ENCODE measurements at regions of chr7 and their contacts with region 1.

Region 1: DNA sequence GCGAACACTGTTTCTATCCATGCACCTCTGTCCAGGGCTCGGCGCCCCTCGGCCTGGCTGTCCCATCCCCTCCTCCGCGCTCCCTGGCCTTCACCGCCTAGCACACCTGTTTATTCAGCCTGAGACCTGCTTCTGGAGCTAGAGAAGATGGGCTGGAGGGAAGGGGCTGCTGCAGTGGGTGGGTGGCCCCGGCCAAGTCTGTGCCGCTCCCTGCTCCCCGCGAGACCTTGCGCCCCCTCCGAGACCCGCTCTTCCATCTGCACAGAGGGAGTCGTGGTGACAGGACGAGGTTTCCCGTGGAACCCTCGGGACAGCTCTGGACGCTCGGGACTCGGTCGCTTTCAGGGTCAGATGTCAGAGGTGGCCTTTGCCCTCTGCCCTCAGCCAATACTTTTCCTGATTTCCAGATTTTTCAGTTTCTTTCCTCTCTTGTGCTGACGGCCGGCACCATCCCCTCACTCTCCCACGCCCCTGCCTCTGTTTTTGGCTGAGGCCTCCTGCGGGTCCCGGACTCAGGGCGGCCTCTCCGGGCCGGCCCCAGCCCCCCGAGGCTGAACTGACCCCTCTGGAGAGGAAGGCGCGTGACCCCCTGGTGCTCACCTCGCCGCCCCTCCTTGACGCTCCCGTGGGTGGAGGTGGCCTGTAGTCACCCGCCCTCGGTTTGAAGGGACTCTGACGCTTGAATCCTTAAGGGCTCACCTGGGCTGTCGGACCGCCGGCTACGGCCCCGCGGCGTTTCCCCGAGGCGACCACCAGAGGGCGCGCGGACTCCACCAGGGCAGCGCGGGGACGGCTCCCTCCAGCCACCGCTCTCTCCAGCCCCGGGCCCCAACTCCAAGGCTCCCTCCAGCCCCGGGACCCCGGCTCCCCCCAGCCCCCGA is 15.6 kb downstream of the SHH start:
- DNase-seq: no peak
- ATAC-seq: peak; percentile 97
- H3K4me3 ChIP-seq: no peak overlapping the region
- H3K27ac ChIP-seq: no peak overlapping the region
- H3K4me1 ChIP-seq: no peaks in the 10 kb centered on the region; a peak in 1 of 4 replicates
- H3K27me3 ChIP-seq: no peaks in the 10 kb centered on the region
- CTCF ChIP-seq: peak; percentile 42 to 57 (median 56); a peak in 5 of 6 replicates
- POLR2A ChIP-seq: no peak
- RAD21 ChIP-seq: peak; percentile 93

Region 2: GRCh38 chr7:155763691-155764437 is 32.8 kb before region 1 on chr7:
- CTCF ChIA-PET with region 1: no interaction called
- POLR2A ChIA-PET with region 1: no interaction called
- RAD21 ChIA-PET with region 1: no interaction called
- intact Hi-C with region 1: no loop called
- DNase-seq: no peak
- ATAC-seq: no peak
- H3K4me3 ChIP-seq: no peak overlapping the region
- H3K27ac ChIP-seq: no peak overlapping the region
- H3K4me1 ChIP-seq: no peaks in the 10 kb centered on the region
- H3K27me3 ChIP-seq: no peaks in the 10 kb centered on the region
- CTCF ChIP-seq: no peak
- POLR2A ChIP-seq: no peak
- RAD21 ChIP-seq: no peak

Region 3: DNA sequence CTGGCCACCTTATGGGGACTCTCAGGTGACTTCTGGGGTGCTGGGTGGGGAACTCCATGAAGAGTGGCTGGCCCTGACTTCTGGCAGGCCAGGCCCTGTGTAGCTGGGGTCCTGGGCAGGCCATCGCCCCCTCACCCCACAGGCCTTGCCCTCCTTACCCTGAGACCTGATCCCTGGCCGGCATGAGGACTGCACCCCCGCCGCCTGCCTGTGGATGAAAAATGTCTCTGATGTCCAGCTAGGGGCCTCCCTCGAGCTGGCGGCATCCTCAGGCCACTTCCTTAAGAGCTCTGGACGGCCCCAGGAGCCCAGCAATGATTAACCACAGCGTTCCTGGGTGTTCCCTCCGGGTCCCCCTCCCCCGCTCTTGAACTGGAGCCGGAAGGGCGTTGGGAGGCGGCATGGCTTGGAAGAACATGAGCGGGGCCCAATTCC is 47.4 kb after region 1 on chr7:
- CTCF ChIA-PET with region 1: no interaction called
- POLR2A ChIA-PET with region 1: no interaction called
- RAD21 ChIA-PET with region 1: no interaction called
- intact Hi-C with region 1: no loop called
- DNase-seq: no peak
- ATAC-seq: no peak
- H3K4me3 ChIP-seq: no peak overlapping the region
- H3K27ac ChIP-seq: peak overlapping the region; percentile 17; the same call in 1 of the 2 replicates
- H3K4me1 ChIP-seq: peaks cover 3 to 7% of the 10 kb centered on the region in 2 experiments; a peak in 2 of 4 replicates
- H3K27me3 ChIP-seq: no peaks in the 10 kb centered on the region
- CTCF ChIP-seq: no peak
- POLR2A ChIP-seq: no peak
- RAD21 ChIP-seq: peak; percentile 50

Region 4: DNA sequence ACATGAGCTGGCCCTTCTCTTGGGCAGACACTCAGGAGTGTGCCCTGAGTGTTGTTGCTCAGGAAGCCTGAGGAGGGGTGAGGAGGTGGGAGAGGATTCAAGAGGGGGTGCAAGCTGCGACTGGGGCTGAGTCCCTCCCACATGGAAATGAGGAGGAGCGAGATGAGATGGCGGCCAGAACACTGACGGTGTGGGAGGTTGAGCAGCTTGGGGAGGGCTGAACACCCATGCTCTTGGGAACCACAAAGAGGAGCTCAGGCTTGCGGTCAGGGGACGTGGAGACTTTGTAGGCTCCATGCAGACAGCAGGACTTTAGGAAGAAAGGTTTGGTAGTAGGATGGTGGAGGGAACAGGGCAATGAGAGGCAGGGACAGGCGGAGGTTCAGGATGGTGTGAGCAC is 178.9 kb after region 1 on chr7:
- CTCF ChIA-PET with region 1: no interaction called
- POLR2A ChIA-PET with region 1: no interaction called
- RAD21 ChIA-PET with region 1: no interaction called
- intact Hi-C with region 1: no loop called
- DNase-seq: no peak
- ATAC-seq: no peak
- H3K4me3 ChIP-seq: no peak overlapping the region
- H3K27ac ChIP-seq: no peak overlapping the region
- H3K4me1 ChIP-seq: no peaks in the 10 kb centered on the region
- H3K27me3 ChIP-seq: peaks cover 22% of the 10 kb centered on the region; the same call in 1 of the 2 replicates
- CTCF ChIP-seq: no peak
- POLR2A ChIP-seq: no peak
- RAD21 ChIP-seq: no peak

Region 5: GRCh38 chr7:156473476-156474240 is 677.0 kb after region 1 on chr7:
- CTCF ChIA-PET with region 1: no interaction called
- POLR2A ChIA-PET with region 1: no interaction called
- RAD21 ChIA-PET with region 1: no interaction called
- intact Hi-C with region 1: loop called (anchors 5 kb)
- DNase-seq: peak; percentile 27
- ATAC-seq: peak; percentile 90
- H3K4me3 ChIP-seq: no peak overlapping the region
- H3K27ac ChIP-seq: no peak overlapping the region
- H3K4me1 ChIP-seq: peaks cover 0 to 19% of the 10 kb centered on the region in 2 experiments; a peak in 2 of 4 replicates
- H3K27me3 ChIP-seq: no peaks in the 10 kb centered on the region
- CTCF ChIP-seq: peak; percentile 85 to 90 (median 87)
- POLR2A ChIP-seq: no peak
- RAD21 ChIP-seq: peak; percentile 91

Region 6: DNA sequence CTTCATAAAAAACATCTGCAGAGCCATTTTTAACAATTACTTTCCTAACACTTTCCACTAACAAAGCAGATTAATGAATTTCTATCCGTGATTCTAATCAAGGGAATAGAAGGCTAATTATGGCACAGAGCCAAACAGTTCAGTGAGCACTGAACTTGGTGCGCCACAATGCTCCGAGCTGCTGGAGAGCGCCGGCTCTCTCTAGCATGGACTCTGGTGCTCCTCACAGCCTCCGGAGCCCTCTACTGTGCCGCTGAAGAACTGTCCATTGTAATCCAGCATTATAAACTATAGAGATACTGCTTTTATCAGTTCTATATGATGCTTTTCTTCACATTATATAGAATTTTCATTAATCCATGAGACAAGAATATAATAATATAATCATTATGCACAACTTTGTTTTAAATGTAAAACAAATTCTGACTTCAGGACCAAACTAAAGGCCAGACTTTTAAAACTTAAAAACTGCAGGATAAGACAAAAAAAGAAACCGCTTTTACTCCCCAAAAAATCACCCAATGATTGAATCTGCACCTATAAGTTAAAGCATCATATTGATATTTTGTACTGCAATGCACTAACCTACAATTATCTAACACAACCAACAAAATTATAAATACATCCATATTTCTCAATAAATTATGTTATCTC is 967.5 kb after region 1 on chr7:
- CTCF ChIA-PET with region 1: no interaction called
- POLR2A ChIA-PET with region 1: no interaction called
- RAD21 ChIA-PET with region 1: no interaction called
- intact Hi-C with region 1: loop called (anchors 2 kb)
- DNase-seq: peak; percentile 45
- ATAC-seq: peak; percentile 100
- H3K4me3 ChIP-seq: no peak overlapping the region
- H3K27ac ChIP-seq: no peak overlapping the region
- H3K4me1 ChIP-seq: peaks cover 0 to 5% of the 10 kb centered on the region in 2 experiments; a peak in 1 of 4 replicates
- H3K27me3 ChIP-seq: no peaks in the 10 kb centered on the region
- CTCF ChIP-seq: peak; percentile 51 to 72 (median 63); a peak in 5 of 6 replicates
- POLR2A ChIP-seq: no peak
- RAD21 ChIP-seq: peak; percentile 81

Region 7: GRCh38 chr7:156816943-156817572 is 1020.4 kb after region 1 on chr7:
- CTCF ChIA-PET with region 1: no interaction called
- POLR2A ChIA-PET with region 1: no interaction called
- RAD21 ChIA-PET with region 1: no interaction called
- intact Hi-C with region 1: loop called (anchors 1 kb)
- DNase-seq: no peak
- ATAC-seq: peak; percentile 74
- H3K4me3 ChIP-seq: no peak overlapping the region
- H3K27ac ChIP-seq: no peak overlapping the region
- H3K4me1 ChIP-seq: no peaks in the 10 kb centered on the region
- H3K27me3 ChIP-seq: no peaks in the 10 kb centered on the region
- CTCF ChIP-seq: peak; percentile 23 to 62 (median 51); a peak in 4 of 6 replicates
- POLR2A ChIP-seq: no peak
- RAD21 ChIP-seq: peak; percentile 75

Region 8: GRCh38 chr7:156827587-156828203 is 1031.1 kb after region 1 on chr7:
- CTCF ChIA-PET with region 1: no interaction called
- POLR2A ChIA-PET with region 1: no interaction called
- RAD21 ChIA-PET with region 1: no interaction called
- intact Hi-C with region 1: loop called (anchors 2 kb)
- DNase-seq: peak; percentile 8
- ATAC-seq: no peak; the same call in 1 of the 2 replicates
- H3K4me3 ChIP-seq: no peak overlapping the region
- H3K27ac ChIP-seq: no peak overlapping the region
- H3K4me1 ChIP-seq: no peaks in the 10 kb centered on the region
- H3K27me3 ChIP-seq: no peaks in the 10 kb centered on the region
- CTCF ChIP-seq: peak; percentile 37 to 52 (median 45); a peak in 5 of 6 replicates
- POLR2A ChIP-seq: no peak
- RAD21 ChIP-seq: peak; percentile 50

Region 9: DNA sequence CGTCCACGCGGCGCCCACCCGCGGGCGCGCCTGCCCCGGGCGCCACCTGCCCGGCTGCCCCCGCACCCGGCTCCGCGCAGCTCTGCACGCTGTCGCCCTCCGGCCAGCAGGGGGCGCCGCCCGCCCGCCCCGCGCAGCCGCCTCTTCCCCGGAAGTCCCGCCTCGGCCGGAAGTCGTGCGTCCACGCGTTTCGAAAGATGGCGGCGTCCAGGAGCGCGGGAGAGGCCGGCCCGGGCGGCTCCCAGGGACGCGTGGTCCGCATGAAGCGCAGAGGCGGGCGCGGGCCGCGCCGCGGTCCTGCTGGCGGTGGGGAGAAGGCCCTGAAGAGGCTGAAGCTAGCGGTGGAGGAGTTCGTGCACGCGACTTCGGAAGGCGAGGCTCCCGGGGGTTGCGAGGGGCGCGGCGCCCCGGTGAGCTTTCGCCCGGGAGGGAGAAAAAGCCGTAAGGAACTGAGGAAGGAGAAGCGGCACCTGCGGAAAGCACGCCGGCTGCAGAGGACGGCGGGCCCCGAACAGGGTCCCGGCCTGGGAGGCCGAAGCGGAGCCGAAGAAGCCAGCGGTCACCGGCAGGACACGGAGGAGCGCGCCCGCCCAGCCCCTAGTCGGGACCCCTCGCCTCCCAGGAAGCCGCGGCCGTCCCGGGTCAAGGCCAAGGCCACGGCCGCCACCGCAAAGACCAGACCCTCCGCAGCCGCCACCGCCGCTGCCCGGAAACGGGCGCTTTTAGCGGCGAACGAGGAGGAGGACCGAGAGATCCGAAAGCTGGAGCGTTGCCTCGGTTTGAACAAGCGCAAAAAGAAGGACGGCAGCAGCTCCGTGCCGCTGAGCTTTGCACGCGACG is 1153.1 kb after region 1 on chr7 and contains the start of gene NOM1:
- CTCF ChIA-PET with region 1: no interaction called
- POLR2A ChIA-PET with region 1: no interaction called
- RAD21 ChIA-PET with region 1: no interaction called
- intact Hi-C with region 1: loop called (anchors 10 kb)
- DNase-seq: peak; percentile 56
- ATAC-seq: peak; percentile 85
- H3K4me3 ChIP-seq: peak within 1 kb of the TSS; percentile 90 to 95
- H3K27ac ChIP-seq: peak within 1 kb of the TSS; percentile 78
- H3K4me1 ChIP-seq: peaks cover 6 to 34% of the 10 kb centered on the region in 2 experiments
- H3K27me3 ChIP-seq: no peaks in the 10 kb centered on the region
- CTCF ChIP-seq: peak; percentile 46 to 76 (median 50); a peak in 5 of 6 replicates
- POLR2A ChIP-seq: peak; percentile 59
- RAD21 ChIP-seq: peak; percentile 42
- total RNA-seq, gene NOM1: 35.4 TPM

Region 10: GRCh38 chr7:157273208-157274093 is 1476.8 kb after region 1 on chr7:
- CTCF ChIA-PET with region 1: no interaction called
- POLR2A ChIA-PET with region 1: no interaction called
- RAD21 ChIA-PET with region 1: no interaction called
- intact Hi-C with region 1: loop called (anchors 10 kb)
- DNase-seq: peak; percentile 21
- ATAC-seq: peak; percentile 87
- H3K4me3 ChIP-seq: no peak overlapping the region
- H3K27ac ChIP-seq: no peak overlapping the region
- H3K4me1 ChIP-seq: peaks cover 0 to 7% of the 10 kb centered on the region in 2 experiments; a peak in 1 of 4 replicates
- H3K27me3 ChIP-seq: no peaks in the 10 kb centered on the region
- CTCF ChIP-seq: peak; percentile 88 to 98 (median 96); a peak in 5 of 6 replicates
- POLR2A ChIP-seq: no peak
- RAD21 ChIP-seq: peak; percentile 94

Measured in HCT116 (cell line).